Motor neuron (in vitro differentiated cells): ENCODE measurements at regions of chr6 and their contacts with region 1.

Region 1: DNA sequence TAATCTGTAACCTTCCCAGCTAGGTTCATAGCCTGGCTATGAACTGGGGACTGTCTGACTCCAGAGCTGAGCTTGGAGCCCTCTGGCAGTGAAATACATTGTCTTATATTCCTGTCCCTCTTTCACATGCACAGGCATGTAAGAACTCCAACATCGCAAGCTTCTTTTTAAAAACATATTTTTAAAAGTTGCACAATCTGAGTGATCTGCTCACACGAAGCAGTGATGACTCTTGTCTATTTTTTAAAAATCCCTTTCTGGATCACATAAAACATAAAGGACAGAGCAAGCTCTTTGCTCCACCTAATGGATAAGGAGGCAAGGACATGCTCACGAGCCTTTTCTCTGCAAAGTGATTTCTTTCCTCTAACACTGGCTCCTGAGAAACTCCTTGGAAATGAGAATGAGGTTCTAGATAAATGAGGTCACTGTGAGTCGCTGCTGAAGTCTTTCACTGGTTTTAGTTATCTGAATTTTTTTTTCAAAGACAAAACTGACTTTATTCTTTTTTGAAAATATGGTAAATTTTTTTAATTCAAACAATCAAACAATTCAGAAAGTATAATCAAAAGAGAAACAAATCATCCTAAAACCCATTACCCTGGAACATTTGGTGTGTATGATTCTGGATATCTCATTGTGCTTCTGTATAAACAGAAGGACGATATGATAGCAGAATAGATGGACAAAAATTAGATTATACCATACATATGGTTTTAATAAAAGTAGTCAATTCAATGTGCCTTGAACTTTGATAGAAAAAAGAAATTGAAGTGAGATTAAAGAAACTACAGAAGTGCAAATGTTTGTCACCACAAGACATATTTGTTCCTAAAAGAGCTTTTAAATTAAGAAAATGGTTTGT is 30.8 kb downstream of the IL20RA start:
- ATAC-seq: peak in 4 of 8 experiments; percentile 79 to 95 (median 90)
- H3K4me3 ChIP-seq: no peak overlapping the region
- H3K27ac ChIP-seq: no peak overlapping the region
- H3K4me1 ChIP-seq: no peaks in the 10 kb centered on the region

Region 2: GRCh38 chr6:136657666-136658065 is 356.3 kb before region 1 on chr6:
- in situ Hi-C with region 1: no loop called
- ATAC-seq: peak; percentile 36 to 77 (median 54)
- H3K4me3 ChIP-seq: no peak overlapping the region
- H3K27ac ChIP-seq: no peak overlapping the region
- H3K4me1 ChIP-seq: no peaks in the 10 kb centered on the region

Region 3: GRCh38 chr6:136846046-136846445 is 167.9 kb before region 1 on chr6:
- in situ Hi-C with region 1: loop called in 1 of 9 experiments (anchors 25 kb)
- ATAC-seq: peak in 3 of 8 experiments; percentile 39 to 66 (median 59)
- H3K4me3 ChIP-seq: no peak overlapping the region
- H3K27ac ChIP-seq: no peak overlapping the region
- H3K4me1 ChIP-seq: no peaks in the 10 kb centered on the region

Region 4: DNA sequence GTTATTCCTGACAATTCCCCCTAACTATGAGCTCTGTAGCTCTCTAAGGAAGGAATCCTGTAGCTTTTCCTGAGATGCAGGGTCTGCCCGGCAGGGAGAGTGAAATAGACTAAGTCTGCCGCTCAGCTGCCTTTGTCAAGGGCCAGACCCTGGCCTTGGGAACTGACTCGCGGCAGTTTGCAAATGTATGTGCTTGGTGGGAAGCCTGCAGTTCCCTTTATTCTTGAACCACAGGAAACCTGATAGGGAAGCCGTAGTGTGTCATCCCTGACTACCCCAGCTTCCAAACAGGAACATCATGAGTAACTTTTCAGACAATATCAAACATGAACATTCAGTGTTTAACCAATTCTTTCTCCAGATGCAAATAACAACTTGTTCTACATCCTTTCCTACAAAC is 283.9 kb after region 1 on chr6:
- in situ Hi-C with region 1: no loop called
- ATAC-seq: peak in 5 of 8 experiments; percentile 28 to 69 (median 63)
- H3K4me3 ChIP-seq: no peak overlapping the region
- H3K27ac ChIP-seq: no peak overlapping the region
- H3K4me1 ChIP-seq: peaks cover 0 to 2% of the 10 kb centered on the region in 2 donors